ENCODE measurements at regions of chr20 and their contacts with region 1.

Region 1: GRCh38 chr20:20860078-20860806 is 147.8 kb upstream of the RALGAPA2 start:
- DNase-seq: peak; percentile 60 to 71 (median 66)
- H3K4me3 ChIP-seq: no peak overlapping the region
- H3K4me3 Mint-ChIP-seq: no peak overlapping the region
- H3K27ac ChIP-seq: no peak overlapping the region
- H3K27ac Mint-ChIP-seq: no peak overlapping the region
- H3K4me1 ChIP-seq: no peaks in the 10 kb centered on the region
- H3K4me1 Mint-ChIP-seq: peaks cover 0 to 2% (median 0%) of the 10 kb centered on the region in 4 donors
- H3K27me3 ChIP-seq: no peaks in the 10 kb centered on the region
- H3K27me3 Mint-ChIP-seq: peaks cover 16 to 18% of the 10 kb centered on the region in 2 donors

Region 2: DNA sequence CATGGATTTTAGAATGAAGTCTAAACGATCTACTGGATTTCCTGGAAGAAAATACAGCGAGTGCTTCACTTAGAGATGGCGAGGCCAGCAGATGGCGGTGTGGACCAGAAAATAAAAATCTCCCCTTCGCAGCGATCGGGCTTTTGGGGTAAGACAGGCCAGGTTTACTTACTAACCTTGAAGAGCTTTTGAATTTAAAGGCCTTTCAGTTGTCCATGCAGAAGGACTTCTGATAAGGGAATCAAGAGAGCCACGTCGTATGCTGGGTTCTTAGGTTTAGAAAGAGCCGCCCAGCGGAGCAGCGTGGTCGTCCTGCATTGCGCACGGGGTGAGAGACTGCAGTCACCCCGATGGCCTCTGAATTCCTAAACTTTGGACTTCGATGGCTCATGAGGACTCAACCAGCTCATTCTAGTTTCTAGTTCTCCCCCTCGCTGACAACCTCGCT is 22.6 kb before region 1 on chr20:
- CTCF ChIA-PET with region 1: interaction called, 17 read pairs
- POLR2A ChIA-PET with region 1: no interaction called
- intact Hi-C with region 1: no loop called
- DNase-seq: peak in 2 of 5 donors; percentile 4 to 8
- H3K4me3 ChIP-seq: no peak overlapping the region
- H3K4me3 Mint-ChIP-seq: peak overlapping the region in 1 of 8 donors; percentile 51
- H3K27ac ChIP-seq: no peak overlapping the region
- H3K27ac Mint-ChIP-seq: peak overlapping the region in 1 of 7 donors; percentile 2
- H3K4me1 ChIP-seq: no peaks in the 10 kb centered on the region
- H3K4me1 Mint-ChIP-seq: peaks cover 0 to 6% (median 3%) of the 10 kb centered on the region in 4 donors
- H3K27me3 ChIP-seq: no peaks in the 10 kb centered on the region
- H3K27me3 Mint-ChIP-seq: peaks cover 4 to 18% of the 10 kb centered on the region in 2 donors

Region 3: GRCh38 chr20:20849161-20849560 is 11.1 kb before region 1 on chr20:
- CTCF ChIA-PET with region 1: interaction called, 21 read pairs
- POLR2A ChIA-PET with region 1: no interaction called
- intact Hi-C with region 1: no loop called
- DNase-seq: no peak
- H3K4me3 ChIP-seq: no peak overlapping the region
- H3K4me3 Mint-ChIP-seq: no peak overlapping the region
- H3K27ac ChIP-seq: no peak overlapping the region
- H3K27ac Mint-ChIP-seq: no peak overlapping the region
- H3K4me1 ChIP-seq: no peaks in the 10 kb centered on the region
- H3K4me1 Mint-ChIP-seq: no peaks in the 10 kb centered on the region
- H3K27me3 ChIP-seq: no peaks in the 10 kb centered on the region
- H3K27me3 Mint-ChIP-seq: peaks cover 5 to 12% of the 10 kb centered on the region in 2 donors

Region 4: GRCh38 chr20:20875716-20876115 is 15.5 kb after region 1 on chr20:
- CTCF ChIA-PET with region 1: interaction called, 32 read pairs
- POLR2A ChIA-PET with region 1: no interaction called
- intact Hi-C with region 1: no loop called
- DNase-seq: no peak
- H3K4me3 ChIP-seq: no peak overlapping the region
- H3K4me3 Mint-ChIP-seq: no peak overlapping the region
- H3K27ac ChIP-seq: no peak overlapping the region
- H3K27ac Mint-ChIP-seq: no peak overlapping the region
- H3K4me1 ChIP-seq: no peaks in the 10 kb centered on the region
- H3K4me1 Mint-ChIP-seq: no peaks in the 10 kb centered on the region
- H3K27me3 ChIP-seq: no peaks in the 10 kb centered on the region
- H3K27me3 Mint-ChIP-seq: peaks cover 14 to 17% of the 10 kb centered on the region in 2 donors

Region 5: DNA sequence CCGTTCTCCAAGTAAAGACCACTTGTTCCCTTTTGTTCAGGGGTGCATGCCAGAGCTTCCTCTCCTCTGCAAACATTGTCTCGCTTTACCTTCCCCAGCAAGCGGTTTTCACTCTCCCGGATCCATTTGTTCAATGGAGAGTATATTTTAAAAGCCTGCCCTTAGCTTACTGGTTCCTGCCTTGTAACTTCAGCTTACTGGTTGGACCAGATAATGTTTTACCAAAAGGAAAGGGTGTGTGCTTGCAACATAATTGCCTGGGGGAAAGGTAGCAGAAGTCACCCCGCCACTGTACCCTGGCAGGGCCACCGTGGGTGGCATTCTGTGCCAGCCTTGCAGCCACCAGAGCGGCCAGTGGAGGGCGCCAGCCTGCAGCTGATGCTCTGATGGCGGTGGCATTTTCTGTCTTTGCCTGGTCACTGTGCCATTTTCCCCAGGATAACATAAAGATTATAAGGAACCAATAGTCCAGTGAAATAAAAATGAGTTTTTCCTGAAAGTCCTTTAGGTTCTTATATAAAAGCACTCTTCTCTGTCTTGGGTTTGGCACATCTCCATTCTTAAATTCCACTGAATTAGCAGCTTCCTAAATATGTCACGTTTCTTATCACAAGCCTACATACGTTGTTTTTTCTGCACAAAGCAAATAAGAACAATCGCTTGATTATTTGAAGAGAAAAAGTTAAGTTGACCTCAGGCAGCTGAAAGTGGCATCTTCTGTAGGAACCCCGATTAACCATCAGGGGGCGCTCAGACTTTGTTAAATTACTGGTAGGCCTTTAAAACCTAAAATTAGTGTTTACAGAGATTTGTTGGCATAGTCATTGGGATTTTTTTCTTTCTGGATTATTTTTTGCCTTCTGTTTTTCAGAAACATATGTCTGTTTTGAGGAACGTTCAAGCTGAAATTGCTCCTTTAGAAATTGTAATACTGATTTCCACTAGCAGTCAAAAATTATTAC is 375.5 kb after region 1 on chr20:
- CTCF ChIA-PET with region 1: interaction called, 6 read pairs
- POLR2A ChIA-PET with region 1: no interaction called
- intact Hi-C with region 1: loop called (anchors 1 kb)
- DNase-seq: peak; percentile 57 to 66 (median 62)
- H3K4me3 ChIP-seq: no peak overlapping the region
- H3K4me3 Mint-ChIP-seq: no peak overlapping the region
- H3K27ac ChIP-seq: no peak overlapping the region
- H3K27ac Mint-ChIP-seq: no peak overlapping the region
- H3K4me1 ChIP-seq: peaks cover 4% of the 10 kb centered on the region
- H3K4me1 Mint-ChIP-seq: peaks cover 2 to 4% (median 3%) of the 10 kb centered on the region in 4 donors
- H3K27me3 ChIP-seq: no peaks in the 10 kb centered on the region
- H3K27me3 Mint-ChIP-seq: no peaks in the 10 kb centered on the region

Region 6: GRCh38 chr20:21571841-21572690 is 711.8 kb after region 1 on chr20:
- CTCF ChIA-PET with region 1: interaction called, 10 read pairs
- POLR2A ChIA-PET with region 1: no interaction called
- intact Hi-C with region 1: loop called (anchors 5 kb)
- DNase-seq: peak in 2 of 5 donors; percentile 15 to 26
- H3K4me3 ChIP-seq: no peak overlapping the region
- H3K4me3 Mint-ChIP-seq: no peak overlapping the region
- H3K27ac ChIP-seq: no peak overlapping the region
- H3K27ac Mint-ChIP-seq: no peak overlapping the region
- H3K4me1 ChIP-seq: peaks cover 15% of the 10 kb centered on the region
- H3K4me1 Mint-ChIP-seq: peaks cover 2 to 13% (median 8%) of the 10 kb centered on the region in 4 donors
- H3K27me3 ChIP-seq: no peaks in the 10 kb centered on the region
- H3K27me3 Mint-ChIP-seq: peaks cover 1 to 10% of the 10 kb centered on the region in 2 donors

Region 7: DNA sequence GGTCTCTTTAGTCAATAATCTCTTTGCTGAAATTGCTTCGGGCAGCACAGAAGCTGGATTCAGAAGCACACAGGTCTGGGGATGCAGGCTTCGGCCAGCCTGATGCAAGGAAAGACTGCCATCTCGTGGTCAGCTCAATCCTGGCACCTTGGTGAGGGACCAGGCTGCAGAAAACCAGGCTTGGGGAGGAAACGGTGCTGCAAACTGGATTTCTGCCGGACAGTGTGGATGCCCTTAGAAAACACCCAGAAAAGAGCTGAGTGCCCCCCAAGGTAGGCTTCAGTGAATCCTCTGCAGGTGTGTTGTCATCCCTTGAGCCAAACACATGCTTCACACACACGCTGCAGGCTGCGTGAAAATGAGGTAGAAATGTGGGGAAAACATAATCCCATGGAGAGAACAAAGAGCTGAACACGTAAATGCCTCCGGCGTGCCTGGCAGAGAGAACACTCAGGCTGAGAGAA is 755.4 kb after region 1 on chr20:
- CTCF ChIA-PET with region 1: interaction called, 3 read pairs
- POLR2A ChIA-PET with region 1: no interaction called
- intact Hi-C with region 1: loop called (anchors 1 kb)
- DNase-seq: peak; percentile 19 to 42 (median 19)
- H3K4me3 ChIP-seq: no peak overlapping the region
- H3K4me3 Mint-ChIP-seq: no peak overlapping the region
- H3K27ac ChIP-seq: no peak overlapping the region
- H3K27ac Mint-ChIP-seq: no peak overlapping the region
- H3K4me1 ChIP-seq: no peaks in the 10 kb centered on the region
- H3K4me1 Mint-ChIP-seq: no peaks in the 10 kb centered on the region
- H3K27me3 ChIP-seq: no peaks in the 10 kb centered on the region
- H3K27me3 Mint-ChIP-seq: peaks cover 0 to 14% of the 10 kb centered on the region in 2 donors

Measured in CD4-positive, alpha-beta memory T cell (primary cell).